ENCODE measurements at regions of chr18 and their contacts with region 1.

Region 1: GRCh38 chr18:11937874-11938478 is 29.9 kb upstream of the MPPE1 start:
- DNase-seq: peak; percentile 88
- ATAC-seq: peak; percentile 79

Region 2: GRCh38 chr18:11995445-11996189 is 57.6 kb after region 1 on chr18:
- intact Hi-C with region 1: loop called (anchors 5 kb)
- DNase-seq: peak; percentile 86
- ATAC-seq: peak; percentile 89

Region 3: GRCh38 chr18:12038639-12039417 is 100.9 kb after region 1 on chr18:
- intact Hi-C with region 1: loop called (anchors 2 kb)
- DNase-seq: peak; percentile 89
- ATAC-seq: peak; percentile 97

Region 4: GRCh38 chr18:12079491-12080237 is 141.7 kb after region 1 on chr18:
- intact Hi-C with region 1: no loop called
- DNase-seq: peak; percentile 77
- ATAC-seq: peak; percentile 93